Dendritic cell treated with granulocyte-macrophage colony-stimulating factor and Interleukin-4, amounts not matched to agents 40 ng/mL and 50 ng/mL, for 4 days (primary cell): ENCODE measurements at regions of chr3 and their contacts with region 1.

Region 1: GRCh38 chr3:40452876-40453730 is 4.0 kb upstream of the RPL14 start:
- H3K4me3 Mint-ChIP-seq: peak overlapping the region; percentile 98
- H3K27ac Mint-ChIP-seq: peak overlapping the region; percentile 96
- H3K4me1 Mint-ChIP-seq: peaks cover 31% of the 10 kb centered on the region
- H3K27me3 Mint-ChIP-seq: peaks cover 2% of the 10 kb centered on the region

Region 2: DNA sequence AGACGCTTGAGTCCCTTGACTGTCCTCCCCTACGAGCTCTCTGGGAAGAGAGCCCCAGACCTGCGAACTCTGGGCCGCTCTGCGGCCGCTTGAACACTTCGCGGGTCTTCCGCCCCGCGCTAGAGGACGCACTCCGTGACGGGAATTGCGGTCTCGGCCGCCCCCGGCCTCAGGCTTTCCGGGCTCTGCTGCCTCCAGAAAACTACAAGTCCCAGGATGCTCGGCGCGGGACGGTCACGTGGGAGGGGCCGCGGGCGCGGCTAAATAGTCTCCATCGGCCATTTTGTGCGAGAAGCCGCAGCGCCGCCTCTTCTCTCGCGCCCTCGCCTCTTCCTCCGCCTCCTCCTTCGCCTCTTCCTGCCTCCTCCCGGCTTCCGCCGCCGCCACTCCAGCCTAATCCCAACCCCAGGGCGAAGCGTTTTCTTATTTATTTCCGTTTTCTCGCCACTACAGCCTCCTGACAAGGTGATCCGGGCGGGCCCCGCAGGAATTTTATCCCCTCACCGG is 143.6 kb before region 1 on chr3 and contains the start of gene EIF1B:
- intact Hi-C with region 1: loop called (anchors 5 kb)
- H3K4me3 Mint-ChIP-seq: peak within 1 kb of the TSS; percentile 98
- H3K27ac Mint-ChIP-seq: peak within 1 kb of the TSS; percentile 97
- H3K4me1 Mint-ChIP-seq: peaks cover 39% of the 10 kb centered on the region
- H3K27me3 Mint-ChIP-seq: no peaks in the 10 kb centered on the region

Region 3: DNA sequence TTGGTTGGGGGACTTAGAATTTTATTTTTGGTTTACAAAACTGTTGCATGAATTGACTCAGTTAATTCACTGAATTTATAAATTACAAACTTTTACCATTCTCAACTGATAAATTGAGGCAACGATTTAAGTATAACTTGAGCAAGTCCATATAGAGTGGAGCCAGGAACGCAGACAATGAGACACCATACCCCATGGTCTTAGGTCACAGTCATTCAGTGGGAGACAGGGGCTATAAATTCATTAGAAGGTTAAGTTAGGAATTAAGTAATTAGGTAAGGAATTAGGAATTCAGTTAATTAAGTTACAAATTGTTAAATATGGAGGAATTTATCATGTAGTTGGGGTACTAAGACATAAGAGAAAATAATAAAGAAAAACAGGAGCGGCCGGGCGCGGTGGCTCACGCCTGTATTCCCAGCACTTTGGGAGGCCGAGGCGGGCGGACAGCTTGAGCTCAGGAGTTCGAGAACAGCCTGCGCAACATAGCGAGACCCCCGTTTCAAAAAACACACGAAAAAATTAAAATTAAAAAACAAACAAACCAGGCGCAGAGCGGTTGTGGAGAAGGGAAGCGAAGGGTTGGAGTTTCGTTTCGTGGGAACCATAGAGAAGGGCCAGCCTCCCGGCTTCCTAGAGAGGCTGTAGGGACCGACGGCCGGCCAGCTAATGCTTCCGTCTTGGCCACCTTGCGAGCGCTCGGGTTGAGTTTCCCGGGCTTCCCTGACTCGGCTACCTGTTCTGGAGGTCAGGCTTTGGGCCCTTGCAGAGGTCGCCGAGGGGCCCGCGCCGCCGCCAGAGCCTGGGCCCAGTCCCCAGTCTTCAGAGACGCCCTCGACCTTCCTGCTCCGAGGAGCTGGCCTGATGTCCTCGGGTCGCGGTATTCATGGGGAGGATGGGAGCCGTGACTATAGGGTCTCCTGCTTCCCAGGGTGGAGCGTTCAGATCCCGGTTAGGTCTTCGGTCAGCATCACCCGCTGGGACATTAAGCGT is 23.7 kb after region 1 on chr3 and contains the start of gene ZNF619:
- intact Hi-C with region 1: loop called (anchors 2 kb)
- H3K4me3 Mint-ChIP-seq: peak within 1 kb of the TSS; percentile 95
- H3K27ac Mint-ChIP-seq: peak within 1 kb of the TSS; percentile 99
- H3K4me1 Mint-ChIP-seq: peaks cover 17% of the 10 kb centered on the region
- H3K27me3 Mint-ChIP-seq: no peaks in the 10 kb centered on the region

Region 4: DNA sequence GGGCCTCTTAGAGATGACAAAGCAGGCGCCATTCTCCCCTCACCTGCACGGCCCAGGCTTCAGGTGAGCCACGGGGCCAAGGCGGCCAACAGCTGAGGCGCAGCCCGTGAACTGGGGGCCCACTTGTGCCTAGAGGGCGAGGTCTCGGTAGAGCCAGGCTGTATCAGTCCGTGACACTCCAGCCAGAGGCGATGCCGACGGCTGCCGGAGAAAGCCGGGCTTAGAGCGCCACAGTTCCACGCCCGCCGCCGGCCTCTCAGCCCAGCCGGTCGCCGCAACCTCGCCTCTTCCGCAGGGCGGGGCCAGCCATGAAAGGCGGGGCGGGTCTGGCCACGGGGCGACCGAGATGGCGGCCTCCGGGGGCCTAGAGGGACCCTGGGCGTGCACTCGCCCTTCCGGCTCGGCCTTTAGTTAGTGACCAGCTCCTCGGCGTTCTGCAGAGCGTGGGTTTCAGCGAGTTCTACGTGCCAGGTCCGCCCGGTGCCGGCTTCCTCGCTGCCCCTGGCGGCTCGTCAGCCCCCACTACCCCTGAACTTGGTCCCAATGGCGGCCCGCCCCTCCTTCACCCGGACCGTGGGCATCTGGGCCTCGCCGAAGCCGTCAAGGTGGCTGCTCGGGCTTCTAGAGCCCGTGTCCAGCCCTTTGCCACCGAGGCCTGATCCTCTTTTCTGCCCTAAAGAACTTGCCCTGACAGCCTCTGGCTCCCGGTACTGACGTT is 71.6 kb after region 1 on chr3 and contains the start of gene ZNF621:
- intact Hi-C with region 1: loop called (anchors 1 kb)
- H3K4me3 Mint-ChIP-seq: peak within 1 kb of the TSS; percentile 88
- H3K27ac Mint-ChIP-seq: peak within 1 kb of the TSS; percentile 98
- H3K4me1 Mint-ChIP-seq: peaks cover 27% of the 10 kb centered on the region
- H3K27me3 Mint-ChIP-seq: no peaks in the 10 kb centered on the region